ENCODE measurements at regions of chr3 and their contacts with region 1.

Region 1: DNA sequence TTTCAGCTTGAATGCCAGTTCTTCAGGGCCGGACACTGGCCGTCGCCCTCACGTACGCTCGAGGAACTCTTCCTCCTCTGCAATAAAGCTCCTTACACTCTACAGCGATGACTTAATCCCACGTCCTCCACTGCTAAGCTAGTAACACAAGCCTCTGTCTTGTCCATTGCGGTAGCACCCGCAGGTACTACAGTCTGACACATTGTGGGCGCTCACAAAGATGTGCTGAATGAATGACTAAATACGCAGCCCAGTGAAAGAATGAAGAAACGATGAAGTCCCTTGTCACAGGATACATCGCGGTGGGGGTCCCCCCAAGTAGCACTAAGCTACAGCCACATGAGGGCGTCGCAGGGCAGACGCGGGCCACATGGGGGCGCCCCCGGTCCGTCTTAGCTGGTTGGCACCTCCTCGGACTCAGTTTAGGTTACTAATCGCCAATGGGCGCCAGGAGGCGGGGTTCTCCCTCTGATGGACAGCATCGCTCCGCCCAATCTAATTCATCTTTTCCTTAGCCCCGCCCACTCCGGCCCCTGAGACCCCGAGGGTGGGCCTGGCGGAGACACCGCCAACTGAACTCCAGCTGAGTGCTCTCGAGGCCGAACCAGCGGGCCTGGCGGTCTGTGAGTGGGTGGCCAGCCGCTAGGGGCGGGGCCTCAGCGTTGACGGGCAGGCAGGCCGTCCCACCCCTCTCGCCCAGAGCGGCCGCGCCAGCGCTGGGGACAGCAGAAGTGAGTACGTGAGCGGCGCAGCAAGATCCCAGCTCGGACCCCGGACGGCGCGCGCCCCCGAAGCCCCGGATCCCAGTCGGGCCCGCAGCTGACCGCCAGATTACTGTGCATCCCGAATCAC is at the start of gene EPHB3:
- DNase-seq: peak; percentile 99
- ATAC-seq: peak; percentile 90
- H3K4me3 Mint-ChIP-seq: peak within 1 kb of the TSS; percentile 71
- H3K27ac Mint-ChIP-seq: no peak within 1 kb of the TSS
- H3K4me1 Mint-ChIP-seq: peaks cover 61% of the 10 kb centered on the region
- H3K27me3 Mint-ChIP-seq: peaks cover 87% of the 10 kb centered on the region
- CTCF ChIP-seq: peak; percentile 93
- total RNA-seq, gene EPHB3: 5.3 to 11.4 TPM (median 6.3 TPM) in 3 replicates

Region 2: GRCh38 chr3:184371570-184372018 is 189.7 kb before region 1 on chr3:
- CTCF ChIA-PET with region 1: interaction called, 25 read pairs
- POLR2A ChIA-PET with region 1: no interaction called
- DNase-seq: peak; percentile 82
- ATAC-seq: peak; percentile 86
- H3K4me3 Mint-ChIP-seq: no peak overlapping the region
- H3K27ac Mint-ChIP-seq: peak overlapping the region; percentile 73; the same call in 1 of the 2 replicates
- H3K4me1 Mint-ChIP-seq: peaks cover 51% of the 10 kb centered on the region
- H3K27me3 Mint-ChIP-seq: peaks cover 4% of the 10 kb centered on the region
- CTCF ChIP-seq: peak; percentile 72

Region 3: DNA sequence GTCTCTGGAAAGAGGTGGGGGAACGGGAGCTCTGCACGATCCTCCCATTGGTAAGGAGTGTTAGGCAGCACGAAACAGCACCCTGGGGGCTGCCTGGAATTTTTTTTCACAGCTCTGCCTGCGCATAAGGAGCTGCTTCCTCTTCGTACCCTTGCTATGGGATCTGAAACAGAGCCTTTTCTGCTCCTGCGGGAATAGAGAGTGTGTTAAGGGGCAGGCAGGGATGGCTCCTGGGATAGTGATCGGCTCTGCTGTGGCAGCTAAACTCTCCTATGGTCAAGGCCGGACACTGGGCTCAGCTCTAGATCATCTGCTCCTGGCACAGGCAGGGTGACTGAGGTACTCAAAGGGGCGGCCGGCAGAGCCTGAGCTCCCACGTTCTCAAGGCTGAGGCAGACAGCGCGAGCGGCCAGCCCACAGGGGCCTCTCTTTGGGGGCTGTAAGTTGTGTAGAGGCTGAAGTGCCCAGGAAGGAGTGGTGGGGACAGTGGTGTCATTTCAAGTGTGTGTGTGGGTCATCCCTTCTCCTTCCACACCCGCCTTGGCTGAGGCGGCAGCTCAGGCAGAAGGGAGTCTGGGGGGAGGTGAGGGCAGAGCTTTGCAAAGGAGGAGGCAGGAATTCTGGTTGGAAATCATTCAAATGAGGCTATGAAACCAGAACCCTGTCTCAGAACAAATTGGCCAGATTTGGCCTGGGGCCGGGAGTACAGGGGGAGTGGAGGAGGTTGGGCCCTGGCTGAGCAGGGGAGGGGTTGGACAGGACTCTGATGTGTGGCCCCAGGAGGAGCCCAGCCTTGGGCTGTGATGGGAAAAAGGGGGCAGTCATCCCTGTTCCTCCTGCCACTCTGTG is 31.3 kb after region 1 on chr3:
- CTCF ChIA-PET with region 1: interaction called, 10 read pairs
- POLR2A ChIA-PET with region 1: no interaction called
- DNase-seq: no peak
- ATAC-seq: peak; percentile 27
- H3K4me3 Mint-ChIP-seq: no peak overlapping the region; the same call in 1 of the 2 replicates
- H3K27ac Mint-ChIP-seq: no peak overlapping the region
- H3K4me1 Mint-ChIP-seq: peaks cover 54% of the 10 kb centered on the region
- H3K27me3 Mint-ChIP-seq: peaks cover 35% of the 10 kb centered on the region
- CTCF ChIP-seq: no peak

Region 4: DNA sequence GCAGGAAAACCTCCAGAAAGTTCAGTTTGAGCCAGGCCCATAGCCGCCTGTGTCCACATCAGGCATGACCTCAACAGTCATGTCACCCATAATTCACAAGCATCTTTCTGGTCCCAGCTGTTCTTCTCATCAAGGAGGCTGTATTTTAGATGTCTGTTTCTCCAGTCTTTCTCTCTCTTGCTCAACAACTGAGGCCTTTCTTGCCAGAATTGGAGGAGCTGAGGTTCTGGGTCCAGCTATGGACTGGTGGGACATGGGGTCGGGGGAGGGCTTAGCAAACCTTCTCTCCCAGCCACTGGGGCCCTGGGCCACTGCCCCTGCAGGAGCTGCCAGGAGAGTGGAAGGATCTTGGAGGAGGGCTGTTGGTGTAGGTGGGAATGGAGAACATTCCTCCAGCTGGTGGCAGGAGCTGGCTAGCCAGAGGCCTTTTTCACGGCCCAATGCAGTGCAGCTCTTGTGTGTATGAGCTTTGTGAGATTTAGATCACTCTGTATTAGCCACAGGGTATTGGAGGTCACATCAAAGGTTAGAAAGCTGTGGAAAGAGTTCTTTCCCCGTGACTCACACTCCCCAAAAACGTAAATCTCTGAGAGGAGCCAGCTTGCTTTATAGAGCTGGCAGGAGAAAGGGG is 127.1 kb after region 1 on chr3:
- CTCF ChIA-PET with region 1: interaction called, 14 read pairs
- POLR2A ChIA-PET with region 1: no interaction called
- DNase-seq: no peak
- ATAC-seq: no peak
- H3K4me3 Mint-ChIP-seq: no peak overlapping the region
- H3K27ac Mint-ChIP-seq: no peak overlapping the region
- H3K4me1 Mint-ChIP-seq: peaks cover 25% of the 10 kb centered on the region
- H3K27me3 Mint-ChIP-seq: no peaks in the 10 kb centered on the region; the same call in 1 of the 2 replicates
- CTCF ChIP-seq: no peak

Region 5: DNA sequence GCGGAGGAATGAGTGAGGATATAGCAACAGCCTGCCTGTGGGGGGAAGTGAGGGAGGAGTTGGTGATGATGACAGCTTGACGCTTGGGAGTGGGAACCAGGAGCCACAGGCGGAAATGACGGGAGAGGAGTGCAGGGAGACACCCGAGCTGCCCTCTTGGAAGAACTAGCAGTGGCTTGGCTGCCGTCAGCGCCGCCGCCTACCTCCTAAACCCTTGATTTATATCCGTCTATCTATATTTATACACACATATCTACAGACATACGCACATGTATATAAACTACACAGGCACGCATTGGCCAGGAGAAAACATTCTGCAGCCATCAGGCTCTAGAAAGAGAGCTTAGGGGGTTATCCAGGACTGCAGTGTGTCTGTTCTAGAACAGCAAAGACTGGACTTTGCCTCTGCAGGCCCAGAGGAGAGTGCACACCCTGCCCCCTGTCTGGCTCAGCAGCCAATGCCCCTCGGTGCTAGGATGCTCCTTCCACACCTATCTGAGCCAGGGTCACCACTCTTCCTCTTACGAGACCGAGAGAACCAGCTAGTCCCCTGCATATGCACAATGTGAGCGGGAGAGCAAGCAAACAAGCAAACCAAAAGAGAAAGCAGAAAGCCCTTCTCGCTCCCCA is 195.8 kb after region 1 on chr3:
- CTCF ChIA-PET with region 1: interaction called, 19 read pairs
- POLR2A ChIA-PET with region 1: no interaction called
- DNase-seq: no peak
- ATAC-seq: peak; percentile 24
- H3K4me3 Mint-ChIP-seq: no peak overlapping the region
- H3K27ac Mint-ChIP-seq: peak overlapping the region; percentile 85
- H3K4me1 Mint-ChIP-seq: peaks cover 54% of the 10 kb centered on the region
- H3K27me3 Mint-ChIP-seq: no peaks in the 10 kb centered on the region
- CTCF ChIP-seq: no peak

Region 6: DNA sequence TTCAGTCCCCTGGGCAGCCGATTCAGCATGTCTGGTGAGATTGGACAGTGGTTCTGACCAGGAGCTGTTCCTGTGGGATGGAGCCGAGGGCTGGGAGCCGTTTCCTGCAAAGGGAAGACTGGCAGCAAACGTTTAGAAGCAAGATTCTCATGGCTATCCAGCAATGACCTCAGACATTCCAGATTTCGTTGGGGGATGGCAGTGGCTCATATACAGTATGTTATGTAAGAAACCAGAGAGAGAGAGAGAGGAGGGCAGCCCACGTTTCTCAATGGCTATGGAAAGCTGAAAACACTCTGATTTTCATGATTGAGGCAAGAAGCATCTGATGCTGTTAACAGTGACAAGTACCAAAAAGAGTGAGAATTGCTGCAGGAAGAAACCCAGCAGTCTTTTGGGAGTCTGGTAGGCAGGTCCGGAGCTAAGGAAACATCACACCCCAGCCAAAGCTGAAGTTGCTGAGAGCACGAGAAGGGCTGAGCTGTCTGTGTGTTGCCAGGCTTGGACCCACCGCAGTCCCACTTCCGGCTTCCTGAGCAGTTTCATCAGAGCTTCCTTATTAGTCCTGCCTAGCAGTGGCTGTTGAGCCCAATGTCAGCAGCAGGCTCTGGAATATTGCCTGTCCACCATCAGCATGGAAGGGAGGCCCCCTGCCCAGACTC is 225.1 kb after region 1 on chr3:
- CTCF ChIA-PET with region 1: interaction called, 30 read pairs
- POLR2A ChIA-PET with region 1: no interaction called
- DNase-seq: no peak
- ATAC-seq: no peak
- H3K4me3 Mint-ChIP-seq: no peak overlapping the region
- H3K27ac Mint-ChIP-seq: no peak overlapping the region
- H3K4me1 Mint-ChIP-seq: peaks cover 29% of the 10 kb centered on the region
- H3K27me3 Mint-ChIP-seq: no peaks in the 10 kb centered on the region; the same call in none of the 2 replicates
- CTCF ChIP-seq: no peak

Measured in WTC11 (cell line).